ENCODE measurements at regions of chr2 and their contacts with region 1.

Region 1: DNA sequence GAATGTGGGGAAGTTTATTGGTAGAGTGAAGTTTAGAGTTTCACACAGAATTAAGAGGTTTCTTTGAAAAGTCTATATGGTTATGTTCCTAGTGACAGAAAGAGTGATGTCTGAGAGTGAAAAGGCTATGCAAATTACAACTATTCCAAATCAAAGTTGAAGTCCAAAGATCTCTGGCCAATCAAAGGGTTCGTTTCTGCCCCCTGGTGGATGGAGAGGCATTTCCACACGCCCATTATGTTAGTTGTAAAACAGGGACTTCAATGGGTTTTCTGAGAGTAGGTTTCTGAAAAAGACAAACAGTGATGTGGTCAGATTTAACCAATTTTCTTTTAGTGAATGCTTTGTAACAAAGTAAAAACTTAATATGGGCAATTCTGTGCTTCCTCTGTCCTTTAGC is 441.5 kb upstream of the POU3F3 start:
- DNase-seq: peak; percentile 41
- H3K4me3 ChIP-seq: no peak overlapping the region
- H3K27ac ChIP-seq: no peak overlapping the region
- H3K4me1 ChIP-seq: no peaks in the 10 kb centered on the region
- H3K27me3 ChIP-seq: no peaks in the 10 kb centered on the region
- CTCF ChIP-seq: peak; percentile 65

Region 2: DNA sequence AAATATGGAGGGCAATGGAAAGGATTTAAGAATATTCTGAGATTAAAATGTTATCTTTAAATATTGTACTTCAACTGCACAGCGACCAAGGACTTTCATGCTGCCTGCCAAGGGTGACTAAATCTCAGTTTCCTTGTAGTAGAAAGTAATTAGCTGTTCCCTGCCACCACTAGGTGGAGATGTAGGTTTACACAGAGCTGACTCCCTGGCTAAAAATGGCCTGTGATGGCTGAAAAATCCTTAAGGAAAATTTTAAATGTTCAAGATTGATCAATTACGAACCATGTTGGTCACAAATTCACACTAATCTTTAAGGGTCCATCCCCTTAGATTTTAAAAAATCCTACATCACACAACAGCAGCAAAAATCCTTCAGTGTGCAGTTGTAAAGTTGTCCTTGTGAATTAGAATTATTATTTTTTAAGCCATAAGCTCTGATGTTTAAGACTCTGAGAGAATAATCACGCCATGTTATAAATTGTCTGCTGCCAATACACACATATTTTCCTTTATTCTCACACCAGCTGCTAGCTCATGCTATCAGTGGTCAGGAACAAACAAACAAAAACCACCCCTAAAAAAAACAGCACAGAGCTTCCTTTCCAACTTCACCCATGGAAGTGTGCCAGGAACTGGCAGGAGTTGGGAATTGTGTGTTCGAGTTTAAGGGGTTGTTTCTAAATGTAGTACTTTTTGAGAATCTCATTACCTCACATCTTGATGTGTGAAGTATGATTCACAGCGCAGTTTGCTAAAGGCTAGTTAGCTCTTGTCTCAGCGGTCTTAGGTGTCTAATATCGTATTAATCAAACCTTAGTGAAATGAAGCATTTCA is 1250.7 kb before region 1 on chr2:
- intact Hi-C with region 1: loop called (anchors 10 kb)
- DNase-seq: peak; percentile 52
- H3K4me3 ChIP-seq: no peak overlapping the region
- H3K27ac ChIP-seq: no peak overlapping the region
- H3K4me1 ChIP-seq: no peaks in the 10 kb centered on the region
- H3K27me3 ChIP-seq: no peaks in the 10 kb centered on the region
- CTCF ChIP-seq: peak; percentile 78

Region 3: GRCh38 chr2:104033399-104033798 is 379.0 kb before region 1 on chr2:
- intact Hi-C with region 1: loop called (anchors 5 kb)
- DNase-seq: no peak
- H3K4me3 ChIP-seq: no peak overlapping the region
- H3K27ac ChIP-seq: no peak overlapping the region
- H3K4me1 ChIP-seq: no peaks in the 10 kb centered on the region
- H3K27me3 ChIP-seq: no peaks in the 10 kb centered on the region
- CTCF ChIP-seq: no peak